HepG2 (cell line): ENCODE measurements at regions of chr18 and their contacts with region 1.

Region 1: GRCh38 chr18:64409511-64409910 is 260.6 kb upstream of the LINC00305 start:
- DNase-seq: no peak
- ATAC-seq: no peak
- H3K4me3 ChIP-seq: no peak overlapping the region
- H3K27ac ChIP-seq: no peak overlapping the region
- H3K4me1 ChIP-seq: no peaks in the 10 kb centered on the region; the same call in 1 of the 2 replicates
- H3K27me3 ChIP-seq: no peaks in the 10 kb centered on the region
- CTCF ChIP-seq: no peak
- EP300 ChIP-seq: no peak
- POLR2A ChIP-seq: no peak
- RAD21 ChIP-seq: no peak

Region 2: GRCh38 chr18:64017870-64018269 is 391.6 kb before region 1 on chr18:
- CTCF ChIA-PET with region 1: no interaction called
- POLR2A ChIA-PET with region 1: no interaction called
- in situ Hi-C with region 1: no loop called
- intact Hi-C with region 1: loop called (anchors 5 kb)
- DNase-seq: peak; percentile 23
- ATAC-seq: no peak
- H3K4me3 ChIP-seq: no peak overlapping the region
- H3K27ac ChIP-seq: no peak overlapping the region
- H3K4me1 ChIP-seq: no peaks in the 10 kb centered on the region
- H3K27me3 ChIP-seq: no peaks in the 10 kb centered on the region
- CTCF ChIP-seq: peak; percentile 43
- EP300 ChIP-seq: no peak
- POLR2A ChIP-seq: no peak
- RAD21 ChIP-seq: no peak